ENCODE measurements at regions of chr4 and their contacts with region 1.

Region 1: GRCh38 chr4:144174401-144175067 is 34.0 kb upstream of the GYPA start:
- DNase-seq: no peak
- ATAC-seq: peak; percentile 71

Region 2: DNA sequence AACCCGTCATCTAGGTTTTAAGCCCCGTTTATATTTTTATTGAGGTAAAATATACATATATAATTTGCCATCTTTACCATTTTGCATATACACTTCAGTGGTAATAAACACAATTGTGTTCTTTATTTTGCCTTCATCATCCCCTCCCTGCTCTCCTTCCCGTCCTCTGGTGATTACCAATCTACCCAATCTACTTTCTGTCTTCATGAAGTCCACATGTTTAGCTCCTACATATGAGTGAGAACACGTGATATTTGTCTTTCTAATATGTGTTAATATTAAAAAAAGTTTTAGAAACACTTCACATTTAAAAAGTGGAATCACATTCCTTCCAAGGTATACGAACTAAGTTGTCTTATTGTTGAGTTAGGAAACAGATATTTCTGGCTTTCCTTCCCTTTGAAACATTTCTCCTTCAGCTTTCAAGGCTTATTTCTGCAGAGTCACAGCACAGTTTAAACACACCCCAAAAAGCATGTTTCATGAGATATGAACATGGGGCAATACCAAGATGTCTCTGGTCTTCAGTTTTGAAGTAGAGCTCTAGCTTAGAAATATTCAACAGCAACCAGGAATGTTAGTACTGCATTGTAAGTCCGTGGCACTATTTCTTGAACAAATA is 69.9 kb before region 1 on chr4:
- intact Hi-C with region 1: no loop called
- DNase-seq: no peak
- ATAC-seq: no peak

Region 3: GRCh38 chr4:145061318-145061920 is 886.9 kb after region 1 on chr4:
- intact Hi-C with region 1: loop called in 1 of 2 experiments (anchors 10 kb)
- DNase-seq: no peak
- ATAC-seq: peak; percentile 72